ENCODE measurements at regions of chr11 and their contacts with region 1.

Region 1: GRCh38 chr11:9363954-9364912 is 20.2 kb upstream of the IPO7 start:
- DNase-seq: peak; percentile 72
- H3K4me3 Mint-ChIP-seq: peak overlapping the region; percentile 73
- H3K27ac Mint-ChIP-seq: peak overlapping the region; percentile 84
- H3K4me1 Mint-ChIP-seq: peaks cover 27% of the 10 kb centered on the region
- H3K27me3 Mint-ChIP-seq: no peaks in the 10 kb centered on the region

Region 2: GRCh38 chr11:9330387-9331384 is 33.5 kb before region 1 on chr11:
- intact Hi-C with region 1: no loop called
- DNase-seq: no peak
- H3K4me3 Mint-ChIP-seq: no peak overlapping the region
- H3K27ac Mint-ChIP-seq: no peak overlapping the region
- H3K4me1 Mint-ChIP-seq: peaks cover 3% of the 10 kb centered on the region
- H3K27me3 Mint-ChIP-seq: peaks cover 3% of the 10 kb centered on the region

Region 3: GRCh38 chr11:9384535-9385303 is 20.5 kb after region 1 on chr11 and contains the start of gene IPO7:
- intact Hi-C with region 1: loop called (anchors 1 kb)
- DNase-seq: peak; percentile 87
- H3K4me3 Mint-ChIP-seq: peak within 1 kb of the TSS; percentile 93
- H3K27ac Mint-ChIP-seq: peak within 1 kb of the TSS; percentile 92
- H3K4me1 Mint-ChIP-seq: peaks cover 21% of the 10 kb centered on the region
- H3K27me3 Mint-ChIP-seq: no peaks in the 10 kb centered on the region
- total RNA-seq, gene IPO7: 143 and 155 TPM in 2 replicates